IMR-90 (cell line): ENCODE measurements at regions of chr14 and their contacts with region 1.

Region 1: DNA sequence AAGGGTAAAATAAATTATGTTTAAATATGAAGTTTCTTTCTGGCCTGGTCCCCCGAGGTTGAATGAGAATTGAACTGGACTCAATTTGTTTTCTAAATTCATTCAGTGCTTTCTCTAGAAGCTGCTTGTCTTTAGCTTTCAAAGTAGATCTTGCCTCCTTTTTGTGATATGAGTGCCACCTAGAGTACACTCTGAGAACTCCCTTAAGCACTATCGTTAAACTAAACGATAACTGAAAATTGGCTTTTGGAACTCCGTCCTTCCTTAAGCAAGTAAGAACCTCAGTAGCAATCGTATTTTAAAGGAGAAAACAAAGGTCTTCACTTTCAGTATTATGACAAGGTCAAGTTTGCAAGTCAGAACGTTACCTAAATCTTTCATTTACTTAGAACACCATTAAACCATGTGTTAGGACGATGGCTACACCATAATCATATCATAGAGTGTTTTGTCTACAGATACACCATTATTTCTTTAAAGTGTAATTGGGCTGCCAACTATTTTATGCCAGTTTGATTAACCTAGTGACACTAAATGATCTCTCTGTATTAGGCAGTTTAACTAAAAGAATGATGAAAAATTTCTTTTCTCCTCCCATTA is 364.8 kb downstream of the SNAPC1 start:
- DNase-seq: peak; percentile 72
- ATAC-seq: peak; percentile 95
- H3K4me3 ChIP-seq: no peak overlapping the region
- H3K27ac ChIP-seq: no peak overlapping the region
- H3K4me1 ChIP-seq: no peaks in the 10 kb centered on the region
- H3K27me3 ChIP-seq: peaks cover 1% of the 10 kb centered on the region; the same call in 1 of the 2 replicates
- CTCF ChIP-seq: peak; percentile 87
- POLR2A ChIP-seq: peak; percentile 33; the same call in 1 of the 2 replicates
- RAD21 ChIP-seq: peak; percentile 92

Region 2: GRCh38 chr14:61456720-61457119 is 670.3 kb before region 1 on chr14:
- CTCF ChIA-PET with region 1: no interaction called
- POLR2A ChIA-PET with region 1: no interaction called
- dilution Hi-C with region 1: no loop called
- in situ Hi-C with region 1: loop called (anchors 5 kb)
- intact Hi-C with region 1: loop called (anchors 2 kb)
- DNase-seq: peak; percentile 73
- ATAC-seq: peak; percentile 91
- H3K4me3 ChIP-seq: no peak overlapping the region
- H3K27ac ChIP-seq: no peak overlapping the region
- H3K4me1 ChIP-seq: no peaks in the 10 kb centered on the region
- H3K27me3 ChIP-seq: peaks cover 19% of the 10 kb centered on the region
- CTCF ChIP-seq: peak; percentile 87
- POLR2A ChIP-seq: peak; percentile 35; the same call in 1 of the 2 replicates
- RAD21 ChIP-seq: peak; percentile 91

Region 3: DNA sequence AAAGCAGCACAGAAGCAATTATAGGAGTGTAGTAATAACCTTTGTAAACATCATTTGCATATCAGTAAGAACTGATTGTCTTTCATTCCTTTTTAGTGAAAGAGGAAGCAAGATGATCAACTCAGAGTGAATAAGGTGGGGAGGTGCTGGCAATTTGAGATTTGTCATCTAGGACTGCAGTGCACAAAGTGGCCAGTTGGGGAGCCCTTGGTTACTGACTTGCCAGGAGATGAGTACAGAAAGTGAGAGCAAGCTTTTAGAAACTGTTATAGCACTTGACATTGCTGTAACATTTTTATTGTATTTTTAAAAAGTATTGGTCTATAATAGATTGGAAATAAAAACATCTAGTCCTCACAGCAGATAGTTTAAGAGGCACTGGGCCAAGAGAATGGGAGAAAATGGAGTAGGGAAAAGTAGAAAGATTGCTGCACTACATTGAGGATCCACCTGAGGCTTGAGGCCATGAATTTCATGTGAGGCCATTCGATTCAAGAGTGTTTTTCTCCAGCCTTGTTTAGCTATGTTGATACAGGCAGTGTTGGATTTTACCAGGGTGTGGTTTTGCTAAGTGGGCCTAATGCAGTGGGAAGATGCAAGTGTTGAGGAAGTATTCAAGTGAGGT is 266.6 kb before region 1 on chr14:
- CTCF ChIA-PET with region 1: no interaction called
- POLR2A ChIA-PET with region 1: no interaction called
- dilution Hi-C with region 1: no loop called
- in situ Hi-C with region 1: no loop called
- intact Hi-C with region 1: loop called (anchors 1 kb)
- DNase-seq: peak; percentile 42
- ATAC-seq: peak; percentile 94
- H3K4me3 ChIP-seq: no peak overlapping the region
- H3K27ac ChIP-seq: no peak overlapping the region
- H3K4me1 ChIP-seq: no peaks in the 10 kb centered on the region
- H3K27me3 ChIP-seq: peaks cover 12% of the 10 kb centered on the region
- CTCF ChIP-seq: peak; percentile 61
- POLR2A ChIP-seq: no peak
- RAD21 ChIP-seq: peak; percentile 54

Region 4: DNA sequence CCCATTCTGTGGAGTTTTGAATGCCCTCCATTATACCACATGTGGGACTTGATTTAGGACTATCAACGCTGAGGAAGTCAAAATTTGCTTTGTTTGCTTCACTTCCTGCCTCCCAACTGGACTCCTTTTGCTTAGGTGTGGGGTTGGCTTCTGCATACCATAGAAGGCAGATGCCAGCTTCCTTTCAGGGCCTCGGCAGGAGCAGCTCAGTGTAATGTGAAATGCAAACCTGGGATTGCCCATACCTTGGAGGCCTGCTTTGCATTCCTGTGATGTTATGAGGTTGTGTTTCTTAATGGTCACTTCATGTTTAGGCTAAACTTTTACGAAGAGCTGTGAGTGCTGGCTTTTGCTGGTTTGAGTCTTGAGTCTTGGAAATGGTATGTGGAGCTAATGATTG is 222.8 kb before region 1 on chr14:
- CTCF ChIA-PET with region 1: no interaction called
- POLR2A ChIA-PET with region 1: no interaction called
- dilution Hi-C with region 1: loop called (anchors 25 kb)
- in situ Hi-C with region 1: loop called (anchors 10 kb)
- intact Hi-C with region 1: no loop called
- DNase-seq: no peak
- ATAC-seq: no peak
- H3K4me3 ChIP-seq: no peak overlapping the region
- H3K27ac ChIP-seq: no peak overlapping the region
- H3K4me1 ChIP-seq: no peaks in the 10 kb centered on the region
- H3K27me3 ChIP-seq: peaks cover 12% of the 10 kb centered on the region
- CTCF ChIP-seq: no peak
- POLR2A ChIP-seq: no peak
- RAD21 ChIP-seq: no peak